ENCODE measurements at regions of chr9 and their contacts with region 1.

Region 1: DNA sequence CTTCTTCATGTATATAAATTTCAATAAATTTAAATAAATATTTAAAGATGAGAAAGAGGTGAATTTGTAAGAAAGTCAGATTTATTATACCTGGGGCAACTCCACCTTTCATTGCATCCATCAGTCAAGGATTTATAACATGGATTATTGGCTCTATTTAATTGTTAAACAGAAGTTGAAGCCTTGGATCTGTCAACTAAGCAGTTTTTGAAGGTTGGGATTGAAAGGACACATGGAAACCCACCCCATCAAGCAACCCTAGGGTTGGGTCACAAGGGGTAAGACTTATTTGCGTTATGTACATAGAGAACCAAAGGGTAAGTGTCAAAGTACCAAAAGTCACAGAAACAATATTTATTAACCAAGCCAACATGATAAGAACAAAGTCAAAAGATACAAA is 342.5 kb downstream of the ELAVL2 start:
- DNase-seq: no peak
- ATAC-seq: no peak
- H3K4me3 ChIP-seq: no peak overlapping the region
- H3K27ac ChIP-seq: no peak overlapping the region
- H3K4me1 ChIP-seq: no peaks in the 10 kb centered on the region
- H3K27me3 ChIP-seq: no peaks in the 10 kb centered on the region
- CTCF ChIP-seq: no peak
- EP300 ChIP-seq: no peak
- POLR2A ChIP-seq: no peak
- RAD21 ChIP-seq: no peak

Region 2: GRCh38 chr9:22813529-22813928 is 670.0 kb before region 1 on chr9:
- CTCF ChIA-PET with region 1: no interaction called
- POLR2A ChIA-PET with region 1: no interaction called
- RAD21 ChIA-PET with region 1: no interaction called
- SMC1A ChIA-PET with region 1: no interaction called
- in situ Hi-C with region 1: no loop called
- intact Hi-C with region 1: loop called (anchors 10 kb)
- DNase-seq: no peak
- ATAC-seq: peak; percentile 74
- H3K4me3 ChIP-seq: no peak overlapping the region
- H3K27ac ChIP-seq: no peak overlapping the region
- H3K4me1 ChIP-seq: no peaks in the 10 kb centered on the region
- H3K27me3 ChIP-seq: no peaks in the 10 kb centered on the region
- CTCF ChIP-seq: peak in 1 of 3 experiments; percentile 49; a peak in 2 of 6 replicates
- EP300 ChIP-seq: no peak
- POLR2A ChIP-seq: no peak
- RAD21 ChIP-seq: peak; percentile 55

Measured in GM12878 (cell line).